PC-3 (cell line): ENCODE measurements at regions of chr13 and their contacts with region 1.

Region 1: GRCh38 chr13:114030666-114031610 is 57.1 kb upstream of the C13orf46 start:
- DNase-seq: no peak
- ATAC-seq: no peak
- H3K4me3 ChIP-seq: no peak overlapping the region
- H3K27ac ChIP-seq: no peak overlapping the region
- H3K4me1 ChIP-seq: no peaks in the 10 kb centered on the region
- H3K27me3 ChIP-seq: no peaks in the 10 kb centered on the region
- CTCF ChIP-seq: no peak

Region 2: GRCh38 chr13:113616281-113616906 is 414.5 kb before region 1 on chr13:
- CTCF ChIA-PET with region 1: no interaction called
- POLR2A ChIA-PET with region 1: interaction called, 15 read pairs
- intact Hi-C with region 1: no loop called
- DNase-seq: no peak
- ATAC-seq: no peak
- H3K4me3 ChIP-seq: no peak overlapping the region
- H3K27ac ChIP-seq: no peak overlapping the region
- H3K4me1 ChIP-seq: no peaks in the 10 kb centered on the region
- H3K27me3 ChIP-seq: no peaks in the 10 kb centered on the region
- CTCF ChIP-seq: no peak